ENCODE measurements at regions of chr11 and their contacts with region 1.

Region 1: DNA sequence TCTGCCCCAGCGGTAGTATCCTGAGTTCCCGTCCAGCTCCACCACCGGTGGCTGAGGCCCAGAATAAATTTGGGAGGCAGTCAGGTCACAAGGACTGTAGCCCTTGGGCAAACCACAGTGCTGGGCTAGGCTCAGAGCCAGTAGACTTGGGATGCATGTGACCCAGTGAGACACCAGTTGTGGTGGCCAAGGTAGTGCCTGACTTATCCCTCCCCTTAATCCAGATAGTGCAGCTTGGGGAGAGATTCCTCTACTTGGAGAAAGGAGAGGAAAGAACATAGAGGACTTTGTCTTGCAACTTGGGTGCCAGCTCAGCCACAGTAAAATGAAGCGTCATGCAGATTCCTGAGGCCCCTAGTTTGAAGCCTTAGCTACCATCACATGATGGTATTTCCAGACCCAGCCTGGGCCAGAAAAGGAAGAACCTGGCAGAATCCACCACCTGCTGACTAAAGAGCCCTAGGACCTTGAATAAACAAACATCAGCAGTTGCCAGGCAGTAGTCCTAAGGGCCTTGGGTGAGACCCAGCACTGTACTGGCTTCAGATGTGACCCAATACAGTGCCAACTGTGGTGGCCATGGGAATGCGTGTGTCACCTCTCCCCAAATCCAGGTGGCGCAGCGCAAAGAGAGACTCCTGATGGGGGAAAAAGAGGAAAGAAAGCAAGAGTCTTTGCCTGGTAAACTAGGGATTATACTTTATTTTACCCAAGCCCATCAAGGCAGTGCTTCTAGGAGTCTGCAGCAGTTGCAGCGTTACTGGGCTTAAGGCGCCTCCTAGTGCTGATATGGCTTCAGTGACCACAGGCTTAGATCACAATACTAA is 17.0 kb upstream of the DDX10 start:
- DNase-seq: peak; percentile 67 to 90 (median 76)
- ATAC-seq: peak; percentile 92 to 97 (median 94)
- H3K4me3 ChIP-seq: peak overlapping the region in 4 of 12 donors; percentile 12 to 27 (median 20)
- H3K27ac ChIP-seq: peak overlapping the region; percentile 10 to 86 (median 70)
- H3K4me1 ChIP-seq: peaks cover 0 to 5% (median 0%) of the 10 kb centered on the region in 12 donors
- H3K27me3 ChIP-seq: no peaks in the 10 kb centered on the region
- CTCF ChIP-seq: peak; percentile 53 to 82 (median 74)
- POLR2A ChIP-seq: no peak

Region 2: GRCh38 chr11:108008656-108009496 is 639.0 kb before region 1 on chr11 and contains the start of gene CUL5:
- intact Hi-C with region 1: loop called in 5 of 10 experiments (anchors 10 kb)
- DNase-seq: peak; percentile 91 to 97 (median 93)
- ATAC-seq: peak; percentile 95 to 98 (median 98)
- H3K4me3 ChIP-seq: peak within 1 kb of the TSS; percentile 71 to 99 (median 88)
- H3K27ac ChIP-seq: peak within 1 kb of the TSS; percentile 85 to 100 (median 98)
- H3K4me1 ChIP-seq: peaks cover 0 to 47% (median 35%) of the 10 kb centered on the region in 12 donors
- H3K27me3 ChIP-seq: no peaks in the 10 kb centered on the region
- CTCF ChIP-seq: peak; percentile 76 to 95 (median 89)
- POLR2A ChIP-seq: peak in 1 of 2 donors; percentile 23
- total RNA-seq, gene CUL5: 22.0 to 46.0 (median 36.8) TPM

Region 3: DNA sequence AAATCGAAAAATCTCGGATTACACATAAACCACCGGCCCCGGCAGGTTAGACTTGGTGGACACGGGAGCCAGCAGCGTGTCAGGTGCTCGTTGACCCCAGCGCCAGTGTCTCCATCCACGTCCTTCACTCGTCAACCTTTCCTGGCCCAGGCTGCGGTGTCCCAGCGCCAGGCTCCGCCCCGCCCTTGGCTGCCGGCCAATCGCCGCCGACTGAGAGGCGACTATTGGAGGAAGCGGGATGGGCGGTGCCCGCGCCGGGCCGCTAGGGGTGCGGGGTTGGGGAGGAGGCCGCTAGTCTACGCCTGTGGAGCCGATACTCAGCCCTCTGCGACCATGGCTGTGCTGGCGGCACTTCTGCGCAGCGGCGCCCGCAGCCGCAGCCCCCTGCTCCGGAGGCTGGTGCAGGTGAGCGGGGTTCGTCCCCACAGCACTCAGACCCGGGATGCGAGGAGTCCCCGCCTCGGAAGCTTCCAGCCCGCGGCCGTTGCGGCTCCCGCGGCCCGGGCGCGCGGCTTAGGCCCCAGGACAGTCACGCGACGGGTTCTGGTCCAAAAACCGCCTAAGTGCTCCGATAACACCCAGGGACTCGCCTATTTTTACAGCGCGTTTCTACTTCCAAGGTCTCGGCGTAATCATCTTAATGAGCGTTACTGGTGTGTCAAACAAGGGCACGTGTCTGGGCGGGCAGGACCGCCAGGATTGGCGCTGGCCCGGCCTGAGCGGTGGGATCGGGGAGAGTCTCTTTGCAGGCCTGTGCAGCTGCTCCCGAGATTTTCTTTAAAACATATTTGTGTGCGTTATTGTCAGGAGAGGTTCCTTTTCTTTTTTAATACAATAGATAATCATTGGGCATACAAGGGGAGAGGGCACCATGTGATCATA is 526.4 kb before region 1 on chr11 and contains the start of gene ACAT1:
- intact Hi-C with region 1: loop called in 6 of 10 experiments (anchors 5 to 10 kb)
- DNase-seq: peak; percentile 98 to 100 (median 99)
- ATAC-seq: peak; percentile 88 to 96 (median 94)
- H3K4me3 ChIP-seq: peak within 1 kb of the TSS; percentile 38 to 85 (median 74)
- H3K27ac ChIP-seq: peak within 1 kb of the TSS; percentile 90 to 97 (median 94)
- H3K4me1 ChIP-seq: peaks cover 0 to 55% (median 31%) of the 10 kb centered on the region in 12 donors
- H3K27me3 ChIP-seq: peaks cover 0 to 3% (median 0%) of the 10 kb centered on the region in 9 donors
- CTCF ChIP-seq: peak in 10 of 12 donors; percentile 27 to 49 (median 33)
- POLR2A ChIP-seq: peak; percentile 66 to 94
- total RNA-seq, gene ACAT1: 206 to 1,337 (median 394) TPM

Region 4: GRCh38 chr11:108340970-108341369 is 306.9 kb before region 1 on chr11:
- intact Hi-C with region 1: loop called in 6 of 10 experiments (anchors 10 kb)
- DNase-seq: no peak
- ATAC-seq: no peak
- H3K4me3 ChIP-seq: no peak overlapping the region
- H3K27ac ChIP-seq: no peak overlapping the region
- H3K4me1 ChIP-seq: no peaks in the 10 kb centered on the region
- H3K27me3 ChIP-seq: no peaks in the 10 kb centered on the region
- CTCF ChIP-seq: no peak
- POLR2A ChIP-seq: no peak

Region 5: GRCh38 chr11:108414958-108415357 is 233.0 kb before region 1 on chr11:
- intact Hi-C with region 1: loop called in 4 of 10 experiments (anchors 2 to 5 kb)
- DNase-seq: no peak
- ATAC-seq: no peak
- H3K4me3 ChIP-seq: no peak overlapping the region
- H3K27ac ChIP-seq: no peak overlapping the region
- H3K4me1 ChIP-seq: no peaks in the 10 kb centered on the region
- H3K27me3 ChIP-seq: no peaks in the 10 kb centered on the region
- CTCF ChIP-seq: no peak
- POLR2A ChIP-seq: no peak

Region 6: DNA sequence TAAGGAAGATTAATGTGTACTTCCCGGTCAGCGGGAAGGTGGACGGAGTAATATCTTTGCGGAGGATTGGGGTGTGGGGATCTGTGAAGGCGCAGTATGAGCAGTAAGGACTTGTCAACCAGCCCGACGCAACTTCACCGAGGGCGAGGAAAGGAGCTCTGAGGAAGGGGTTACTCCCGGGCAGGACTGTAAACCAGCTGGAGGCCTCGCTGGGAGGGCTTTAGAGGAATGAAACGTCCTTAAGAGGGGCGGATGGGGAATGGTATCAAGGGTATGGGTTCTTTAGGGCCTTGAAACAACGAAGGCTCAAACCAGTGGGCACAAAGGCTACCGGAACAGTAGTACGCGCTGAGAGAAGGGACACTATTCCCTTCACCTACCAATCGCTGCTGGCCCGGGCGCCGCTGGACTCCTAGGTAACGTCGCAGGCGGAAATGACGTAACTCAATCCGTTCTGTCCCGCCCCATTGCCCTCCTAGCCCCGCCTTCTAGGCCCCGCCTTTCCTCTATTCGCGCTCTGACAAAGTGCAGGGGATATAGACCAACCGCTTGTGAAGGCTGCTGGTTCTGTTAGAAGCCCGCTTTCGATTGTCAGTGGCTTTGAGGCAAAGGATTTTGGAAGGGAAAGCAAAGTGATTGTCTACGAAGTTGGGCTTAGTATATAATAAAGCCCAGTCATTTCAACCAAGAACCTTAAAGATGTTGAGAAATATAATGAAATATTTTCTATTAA is 180.7 kb before region 1 on chr11 and contains the start of gene C11orf65:
- intact Hi-C with region 1: loop called in 1 of 10 experiments (anchors 1 kb)
- DNase-seq: peak; percentile 96 to 97 (median 96)
- ATAC-seq: peak; percentile 100
- H3K4me3 ChIP-seq: peak within 1 kb of the TSS; percentile 49 to 83 (median 68)
- H3K27ac ChIP-seq: peak within 1 kb of the TSS; percentile 84 to 100 (median 96)
- H3K4me1 ChIP-seq: peaks cover 0 to 16% (median 5%) of the 10 kb centered on the region in 12 donors
- H3K27me3 ChIP-seq: no peaks in the 10 kb centered on the region
- CTCF ChIP-seq: no peak
- POLR2A ChIP-seq: peak; percentile 77 to 98
- total RNA-seq, gene C11orf65: 0.33 to 1.9 (median 1.1) TPM in 6 of 9 donors, not detected in the others

Region 7: GRCh38 chr11:108497317-108498045 is 150.4 kb before region 1 on chr11:
- intact Hi-C with region 1: loop called in 4 of 10 experiments (anchors 2 to 10 kb)
- DNase-seq: peak; percentile 84 to 92 (median 87)
- ATAC-seq: peak; percentile 97 to 98 (median 98)
- H3K4me3 ChIP-seq: peak overlapping the region; percentile 64 to 95 (median 73)
- H3K27ac ChIP-seq: peak overlapping the region; percentile 84 to 98 (median 94)
- H3K4me1 ChIP-seq: peaks cover 0 to 16% (median 5%) of the 10 kb centered on the region in 12 donors
- H3K27me3 ChIP-seq: no peaks in the 10 kb centered on the region
- CTCF ChIP-seq: no peak
- POLR2A ChIP-seq: peak in 1 of 2 donors; percentile 82

Region 8: DNA sequence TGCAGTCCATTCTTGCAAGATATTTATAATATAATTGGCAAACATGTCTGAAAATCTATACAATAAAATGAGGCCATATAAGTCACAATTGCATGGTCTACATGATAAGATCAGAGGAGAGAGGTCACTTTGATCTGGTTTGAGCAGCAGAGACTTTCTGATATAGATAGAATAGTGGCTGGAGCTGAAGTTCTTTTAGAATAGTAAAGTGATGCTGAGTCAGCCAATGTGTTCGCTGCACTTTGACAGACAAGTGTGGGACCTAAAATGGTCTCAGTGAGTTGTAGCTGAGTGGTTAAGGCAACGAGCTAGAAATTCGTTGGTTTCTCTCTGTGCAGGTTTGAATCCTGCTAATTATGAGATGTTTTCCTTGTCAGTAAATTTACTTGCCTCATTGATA is 517.1 kb after region 1 on chr11:
- intact Hi-C with region 1: no loop called
- DNase-seq: no peak
- ATAC-seq: no peak
- H3K4me3 ChIP-seq: no peak overlapping the region
- H3K27ac ChIP-seq: no peak overlapping the region
- H3K4me1 ChIP-seq: no peaks in the 10 kb centered on the region
- H3K27me3 ChIP-seq: no peaks in the 10 kb centered on the region
- CTCF ChIP-seq: no peak
- POLR2A ChIP-seq: no peak